Activated CD4-positive, alpha-beta T cell treated with anti-CD3 and anti-CD28 coated beads for 36 hours (primary cell): ENCODE measurements at regions of chr1 and their contacts with region 1.

Region 1: GRCh38 chr1:67500413-67500959 is 70.3 kb upstream of the SERBP1 start:
- DNase-seq: peak; percentile 95
- ATAC-seq: peak; percentile 100
- H3K4me3 Mint-ChIP-seq: no peak overlapping the region
- H3K27ac Mint-ChIP-seq: no peak overlapping the region
- H3K4me1 Mint-ChIP-seq: peaks cover 4% of the 10 kb centered on the region
- H3K27me3 Mint-ChIP-seq: peaks cover 1% of the 10 kb centered on the region

Region 2: GRCh38 chr1:66996018-66996682 is 504.3 kb before region 1 on chr1:
- CTCF ChIA-PET with region 1: interaction called, 6 read pairs
- POLR2A ChIA-PET with region 1: no interaction called
- intact Hi-C with region 1: loop called (anchors 1 to 5 kb)
- DNase-seq: peak; percentile 79
- ATAC-seq: peak; percentile 79
- H3K4me3 Mint-ChIP-seq: no peak overlapping the region
- H3K27ac Mint-ChIP-seq: peak overlapping the region; percentile 53
- H3K4me1 Mint-ChIP-seq: peaks cover 16% of the 10 kb centered on the region
- H3K27me3 Mint-ChIP-seq: no peaks in the 10 kb centered on the region

Region 3: DNA sequence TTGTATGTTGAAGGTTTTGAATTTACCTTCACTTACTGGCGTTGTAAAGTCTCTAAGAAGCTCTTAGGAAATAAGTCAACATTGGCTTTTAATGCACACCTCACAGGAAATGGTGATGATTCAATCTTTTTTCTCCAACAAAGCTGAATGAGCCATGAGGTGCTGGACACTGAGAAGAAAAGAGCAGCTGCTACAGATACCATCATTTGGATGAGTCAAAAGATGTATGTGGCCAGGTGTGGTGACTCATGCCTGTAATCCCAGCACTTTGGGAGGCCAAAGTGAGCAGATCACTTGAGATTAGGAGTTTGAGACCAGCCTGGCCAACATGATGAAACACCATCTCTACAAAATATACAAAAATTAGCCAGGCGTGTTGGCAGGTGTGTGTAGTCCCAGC is 337.5 kb before region 1 on chr1:
- CTCF ChIA-PET with region 1: no interaction called
- POLR2A ChIA-PET with region 1: no interaction called
- intact Hi-C with region 1: loop called in 1 of 2 experiments (anchors 5 kb)
- DNase-seq: peak; percentile 71
- ATAC-seq: peak; percentile 73
- H3K4me3 Mint-ChIP-seq: peak overlapping the region; percentile 59
- H3K27ac Mint-ChIP-seq: peak overlapping the region; percentile 90
- H3K4me1 Mint-ChIP-seq: peaks cover 66% of the 10 kb centered on the region
- H3K27me3 Mint-ChIP-seq: peaks cover 1% of the 10 kb centered on the region

Region 4: DNA sequence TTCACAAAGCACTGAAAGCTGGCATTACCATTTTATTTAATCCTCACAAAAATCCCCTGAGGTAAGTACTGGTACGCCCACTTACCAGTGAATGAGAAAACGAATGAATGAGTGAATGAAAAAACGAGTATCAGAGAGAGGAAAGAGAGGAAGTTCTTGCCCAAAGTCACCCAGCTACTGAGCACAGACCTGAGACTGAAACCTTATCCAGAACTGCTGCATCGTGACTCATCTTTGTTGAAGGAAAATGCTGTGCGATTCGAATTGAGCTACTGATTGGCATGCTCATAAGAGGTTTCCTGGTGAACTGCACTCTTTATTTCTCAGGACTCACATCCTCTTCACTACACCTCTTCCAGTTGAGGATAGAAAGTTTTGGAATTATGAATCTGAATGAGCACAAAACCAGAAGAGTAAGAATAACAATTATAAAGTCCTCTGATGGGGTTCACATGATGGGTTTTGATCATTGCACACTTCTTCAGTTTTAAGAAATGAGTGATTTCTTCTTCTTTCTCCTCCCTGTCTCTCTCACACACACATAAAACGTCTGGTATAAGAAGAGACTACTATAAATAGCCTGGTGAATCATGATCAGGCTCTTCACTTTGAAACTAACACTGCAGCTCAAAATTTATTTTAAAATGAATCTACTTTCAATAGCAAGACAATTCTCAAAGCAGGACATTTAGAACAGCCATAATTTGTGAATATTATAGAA is 160.7 kb before region 1 on chr1:
- CTCF ChIA-PET with region 1: interaction called, 4 read pairs
- POLR2A ChIA-PET with region 1: no interaction called
- intact Hi-C with region 1: loop called in 1 of 2 experiments (anchors 5 kb)
- DNase-seq: peak; percentile 67
- ATAC-seq: peak; percentile 67
- H3K4me3 Mint-ChIP-seq: peak overlapping the region; percentile 40
- H3K27ac Mint-ChIP-seq: peak overlapping the region; percentile 94
- H3K4me1 Mint-ChIP-seq: peaks cover 87% of the 10 kb centered on the region
- H3K27me3 Mint-ChIP-seq: no peaks in the 10 kb centered on the region

Region 5: GRCh38 chr1:67430352-67431155 is 69.9 kb before region 1 on chr1 and contains the start of gene SERBP1:
- CTCF ChIA-PET with region 1: interaction called, 17 read pairs
- POLR2A ChIA-PET with region 1: interaction called, 3 read pairs
- intact Hi-C with region 1: loop called (anchors 1 to 2 kb)
- DNase-seq: peak; percentile 97
- ATAC-seq: peak; percentile 91
- H3K4me3 Mint-ChIP-seq: peak within 1 kb of the TSS; percentile 97
- H3K27ac Mint-ChIP-seq: peak within 1 kb of the TSS; percentile 100
- H3K4me1 Mint-ChIP-seq: peaks cover 48% of the 10 kb centered on the region
- H3K27me3 Mint-ChIP-seq: no peaks in the 10 kb centered on the region
- total RNA-seq, gene SERBP1: 433 to 510 TPM

Region 6: GRCh38 chr1:67515324-67516080 is 15.0 kb after region 1 on chr1:
- CTCF ChIA-PET with region 1: interaction called, 11 read pairs
- POLR2A ChIA-PET with region 1: interaction called, 4 read pairs
- intact Hi-C with region 1: no loop called
- DNase-seq: no peak
- ATAC-seq: no peak
- H3K4me3 Mint-ChIP-seq: no peak overlapping the region
- H3K27ac Mint-ChIP-seq: no peak overlapping the region
- H3K4me1 Mint-ChIP-seq: no peaks in the 10 kb centered on the region
- H3K27me3 Mint-ChIP-seq: no peaks in the 10 kb centered on the region